ENCODE measurements at regions of chr3 and their contacts with region 1.

Region 1: GRCh38 chr3:129650256-129650872 is 43.9 kb upstream of the PLXND1 start:
- DNase-seq: peak; percentile 84 to 86
- H3K4me3 ChIP-seq: no peak overlapping the region
- H3K27ac ChIP-seq: no peak overlapping the region
- H3K4me1 ChIP-seq: peaks cover 0 to 5% of the 10 kb centered on the region in 2 donors
- H3K27me3 ChIP-seq: no peaks in the 10 kb centered on the region
- CTCF ChIP-seq: peak; percentile 63 to 83 (median 75)
- POLR2A ChIP-seq: no peak

Region 2: GRCh38 chr3:129934234-129935123 is 284.1 kb after region 1 on chr3:
- intact Hi-C with region 1: loop called (anchors 10 kb)
- DNase-seq: peak; percentile 22 to 37
- H3K4me3 ChIP-seq: no peak overlapping the region
- H3K27ac ChIP-seq: no peak overlapping the region
- H3K4me1 ChIP-seq: no peaks in the 10 kb centered on the region
- H3K27me3 ChIP-seq: no peaks in the 10 kb centered on the region
- CTCF ChIP-seq: peak; percentile 86 to 89 (median 87)
- POLR2A ChIP-seq: no peak